Activated CD4-positive, alpha-beta memory T cell treated with anti-CD3 and anti-CD28 coated beads for 36 hours (primary cell): ENCODE measurements at regions of chr6 and their contacts with region 1.

Region 1: GRCh38 chr6:150004783-150005717 is 20.3 kb downstream of the RAET1L start:
- DNase-seq: peak; percentile 94
- H3K4me3 Mint-ChIP-seq: peak overlapping the region; percentile 80
- H3K27ac Mint-ChIP-seq: peak overlapping the region; percentile 42
- H3K4me1 Mint-ChIP-seq: peaks cover 64% of the 10 kb centered on the region
- H3K27me3 Mint-ChIP-seq: peaks cover 27% of the 10 kb centered on the region

Region 2: GRCh38 chr6:149746147-149746946 is 258.7 kb before region 1 on chr6 and contains the start of gene NUP43:
- CTCF ChIA-PET with region 1: no interaction called
- POLR2A ChIA-PET with region 1: interaction called, 3 read pairs
- intact Hi-C with region 1: loop called (anchors 2 kb)
- DNase-seq: peak; percentile 97
- H3K4me3 Mint-ChIP-seq: peak within 1 kb of the TSS; percentile 98
- H3K27ac Mint-ChIP-seq: peak within 1 kb of the TSS; percentile 85
- H3K4me1 Mint-ChIP-seq: peaks cover 28% of the 10 kb centered on the region
- H3K27me3 Mint-ChIP-seq: no peaks in the 10 kb centered on the region
- total RNA-seq, gene NUP43: 64.3 to 69.8 TPM

Region 3: DNA sequence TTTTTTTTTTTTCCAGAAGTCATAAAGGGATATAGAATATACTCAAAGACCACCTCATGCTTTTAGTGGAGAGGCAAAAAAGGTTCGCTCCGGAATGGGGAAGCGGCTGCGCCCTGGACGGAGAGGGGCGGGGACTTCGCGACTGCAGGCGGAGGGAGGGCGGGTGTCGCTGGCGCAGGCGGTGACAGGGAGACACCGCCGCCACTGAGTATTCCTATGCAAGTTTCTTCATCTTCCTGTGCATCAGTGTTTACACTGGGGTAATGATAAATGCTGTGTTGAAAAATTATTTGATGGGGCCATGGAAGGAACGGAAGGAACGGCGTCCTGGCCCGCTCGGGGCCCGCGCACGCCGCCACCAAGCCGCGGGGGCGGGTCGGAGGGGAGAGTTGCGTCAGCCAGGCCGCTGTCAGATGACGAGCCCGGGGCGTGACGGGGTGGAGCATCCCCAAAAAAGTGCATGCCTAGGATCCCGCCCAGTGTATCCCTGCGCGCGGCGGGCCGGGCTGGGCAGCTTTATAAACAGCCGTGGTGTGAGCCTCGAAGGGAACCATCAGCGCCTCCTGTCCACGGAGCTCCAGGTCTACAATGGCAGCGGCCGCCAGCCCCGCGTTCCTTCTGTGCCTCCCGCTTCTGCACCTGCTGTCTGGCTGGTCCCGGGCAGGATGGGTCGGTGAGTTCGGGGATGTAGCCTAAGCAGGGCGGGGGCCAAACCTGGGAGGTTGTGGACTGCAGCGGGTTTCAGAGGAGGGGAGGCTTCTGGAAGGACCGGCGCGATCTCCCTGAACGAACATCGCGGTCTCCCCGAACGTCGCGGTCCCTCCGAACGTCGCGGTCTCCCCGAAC is 41.4 kb before region 1 on chr6 and contains the start of gene ULBP1:
- CTCF ChIA-PET with region 1: interaction called, 3 read pairs
- POLR2A ChIA-PET with region 1: no interaction called
- intact Hi-C with region 1: loop called (anchors 1 kb)
- DNase-seq: peak; percentile 91
- H3K4me3 Mint-ChIP-seq: peak within 1 kb of the TSS; percentile 86
- H3K27ac Mint-ChIP-seq: peak within 1 kb of the TSS; percentile 70
- H3K4me1 Mint-ChIP-seq: peaks cover 29% of the 10 kb centered on the region
- H3K27me3 Mint-ChIP-seq: peaks cover 75% of the 10 kb centered on the region
- total RNA-seq, gene ULBP1: 1.8 to 2.2 TPM

Region 4: GRCh38 chr6:150016324-150017185 is 11.5 kb after region 1 on chr6:
- CTCF ChIA-PET with region 1: interaction called, 15 read pairs
- POLR2A ChIA-PET with region 1: no interaction called
- intact Hi-C with region 1: no loop called
- DNase-seq: peak; percentile 44
- H3K4me3 Mint-ChIP-seq: no peak overlapping the region
- H3K27ac Mint-ChIP-seq: peak overlapping the region; percentile 15
- H3K4me1 Mint-ChIP-seq: peaks cover 24% of the 10 kb centered on the region
- H3K27me3 Mint-ChIP-seq: peaks cover 65% of the 10 kb centered on the region

Region 5: GRCh38 chr6:150169609-150170008 is 164.6 kb after region 1 on chr6:
- CTCF ChIA-PET with region 1: no interaction called
- POLR2A ChIA-PET with region 1: no interaction called
- intact Hi-C with region 1: loop called (anchors 10 kb)
- DNase-seq: peak; percentile 71
- H3K4me3 Mint-ChIP-seq: no peak overlapping the region
- H3K27ac Mint-ChIP-seq: peak overlapping the region; percentile 70
- H3K4me1 Mint-ChIP-seq: peaks cover 16% of the 10 kb centered on the region
- H3K27me3 Mint-ChIP-seq: peaks cover 25% of the 10 kb centered on the region

Region 6: DNA sequence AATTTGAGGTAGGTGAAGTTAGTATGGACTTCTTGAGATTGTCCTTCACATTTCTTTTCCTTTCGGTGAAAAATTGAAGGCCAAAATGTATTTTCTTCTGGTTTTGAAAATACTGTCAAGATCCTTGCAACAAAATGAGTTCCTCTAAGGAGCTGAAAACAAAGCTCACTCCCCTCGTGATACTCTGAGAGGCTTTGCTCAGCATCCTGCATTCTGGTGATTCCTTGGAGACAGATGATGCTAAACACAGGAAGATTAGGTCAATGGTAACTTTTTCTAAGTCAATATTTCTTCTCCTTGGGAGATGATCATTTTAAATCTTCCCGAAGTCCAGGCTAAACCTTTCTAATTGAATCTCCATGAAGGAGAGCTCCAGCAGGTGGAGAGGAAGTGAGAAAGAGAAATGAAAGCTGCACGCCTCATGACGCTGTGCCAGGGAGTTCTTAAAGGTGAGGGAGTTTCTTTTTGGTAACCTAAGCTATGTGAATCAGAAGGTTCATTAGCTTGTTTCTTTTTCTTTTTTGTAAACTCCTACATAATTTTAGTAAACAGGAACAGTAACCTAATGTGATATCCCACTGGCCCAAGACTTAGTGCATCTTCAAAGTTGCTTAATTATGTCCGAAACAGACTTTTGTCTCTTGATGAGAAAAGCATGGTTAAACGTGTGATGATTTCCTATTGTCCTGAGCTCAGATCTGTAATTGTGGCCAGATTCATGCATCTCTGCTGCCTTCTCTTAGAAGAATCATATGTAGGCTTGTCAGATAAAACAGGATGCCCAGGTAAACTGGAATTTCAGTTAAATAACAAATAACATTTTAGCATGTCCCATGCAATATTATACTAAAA is 1817.4 kb after region 1 on chr6:
- CTCF ChIA-PET with region 1: no interaction called
- POLR2A ChIA-PET with region 1: no interaction called
- intact Hi-C with region 1: no loop called
- DNase-seq: no peak
- H3K4me3 Mint-ChIP-seq: no peak overlapping the region
- H3K27ac Mint-ChIP-seq: no peak overlapping the region
- H3K4me1 Mint-ChIP-seq: peaks cover 4% of the 10 kb centered on the region
- H3K27me3 Mint-ChIP-seq: no peaks in the 10 kb centered on the region